ENCODE measurements at regions of chr4 and their contacts with region 1.

Region 1: GRCh38 chr4:83012687-83013419 is 2.2 kb upstream of the LIN54 start:
- DNase-seq: peak; percentile 98
- ATAC-seq: peak; percentile 78
- H3K4me3 Mint-ChIP-seq: peak overlapping the region; percentile 89
- H3K27ac Mint-ChIP-seq: peak overlapping the region; percentile 91
- H3K4me1 Mint-ChIP-seq: peaks cover 22% of the 10 kb centered on the region
- H3K27me3 Mint-ChIP-seq: no peaks in the 10 kb centered on the region

Region 2: DNA sequence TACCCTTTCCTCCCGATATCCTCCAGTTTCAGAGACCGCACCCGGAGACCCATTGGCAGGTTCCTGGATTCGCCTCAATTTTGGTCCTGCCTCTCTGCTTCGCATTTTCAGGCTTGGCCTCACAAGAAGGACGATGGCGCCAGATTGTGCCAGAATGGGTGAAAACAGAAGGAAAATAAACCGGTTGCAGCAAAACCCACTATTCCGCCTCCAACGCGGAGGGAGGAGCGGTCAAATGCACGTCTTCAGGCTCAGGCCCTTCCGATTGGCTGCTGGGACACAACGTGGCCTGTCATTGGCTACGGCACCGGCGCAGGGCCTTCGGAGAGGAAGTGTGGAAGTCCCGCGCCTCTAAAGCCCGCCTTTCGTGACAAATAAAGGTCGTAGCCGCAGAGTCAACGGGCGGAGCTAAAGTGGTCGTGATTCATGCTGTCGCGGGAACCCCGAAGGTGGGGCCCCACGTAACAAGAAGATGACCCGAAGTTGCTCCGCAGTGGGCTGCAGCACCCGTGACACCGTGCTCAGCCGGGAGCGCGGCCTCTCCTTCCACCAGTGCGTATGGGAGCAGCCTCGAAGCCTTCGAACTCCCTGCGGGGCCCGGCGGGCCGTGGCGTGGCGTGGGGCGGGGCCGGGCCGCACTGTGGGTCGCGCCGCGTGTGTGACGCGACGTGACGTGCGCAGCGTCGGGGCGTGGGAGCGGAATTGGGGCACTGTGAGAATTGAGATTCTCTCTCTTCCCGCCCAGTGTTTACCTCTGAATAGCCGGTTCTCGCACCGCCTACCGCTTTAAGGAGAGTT is 112.3 kb before region 1 on chr4 and contains the start of gene THAP9:
- POLR2A ChIA-PET with region 1: interaction called, 39 read pairs
- DNase-seq: peak; percentile 95
- ATAC-seq: peak; percentile 89
- H3K4me3 Mint-ChIP-seq: no peak within 1 kb of the TSS
- H3K27ac Mint-ChIP-seq: no peak within 1 kb of the TSS
- H3K4me1 Mint-ChIP-seq: peaks cover 39% of the 10 kb centered on the region
- H3K27me3 Mint-ChIP-seq: no peaks in the 10 kb centered on the region
- total RNA-seq, gene THAP9: 4.0 to 4.7 TPM

Region 3: GRCh38 chr4:83034630-83035494 is 22.0 kb after region 1 on chr4 and contains the start of gene COPS4:
- POLR2A ChIA-PET with region 1: interaction called, 90 read pairs
- DNase-seq: peak; percentile 89
- ATAC-seq: peak; percentile 97
- H3K4me3 Mint-ChIP-seq: peak within 1 kb of the TSS; percentile 100
- H3K27ac Mint-ChIP-seq: peak within 1 kb of the TSS; percentile 99
- H3K4me1 Mint-ChIP-seq: peaks cover 18% of the 10 kb centered on the region
- H3K27me3 Mint-ChIP-seq: no peaks in the 10 kb centered on the region
- total RNA-seq, gene COPS4: 29.3 to 30.3 TPM

Region 4: DNA sequence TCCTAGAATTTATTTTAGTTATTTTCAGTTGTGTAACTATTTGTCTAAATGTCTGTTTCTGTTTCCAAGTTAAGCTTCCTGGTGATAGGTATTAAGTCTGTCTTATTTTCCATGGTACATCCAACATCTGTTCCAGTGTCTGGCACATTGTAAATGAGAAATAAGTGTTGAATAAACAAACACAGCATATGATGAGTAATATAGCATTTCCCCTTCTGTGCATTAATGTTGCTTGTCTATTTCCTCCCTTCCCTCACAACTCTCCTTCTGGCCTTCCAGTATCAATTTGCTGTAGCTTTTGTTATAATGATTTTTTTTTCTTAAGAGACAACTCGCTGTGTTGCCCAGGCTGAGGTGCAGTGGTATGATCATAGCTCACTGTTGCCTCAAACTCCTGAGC is 58.3 kb after region 1 on chr4:
- POLR2A ChIA-PET with region 1: no interaction called
- DNase-seq: no peak
- ATAC-seq: no peak
- H3K4me3 Mint-ChIP-seq: no peak overlapping the region
- H3K27ac Mint-ChIP-seq: no peak overlapping the region
- H3K4me1 Mint-ChIP-seq: peaks cover 10% of the 10 kb centered on the region
- H3K27me3 Mint-ChIP-seq: no peaks in the 10 kb centered on the region